ENCODE measurements at regions of chr12 and their contacts with region 1.

Region 1: GRCh38 chr12:25958428-25959070 is at the start of gene RASSF8:
- DNase-seq: no peak
- H3K4me3 ChIP-seq: peak within 1 kb of the TSS; percentile 92
- CTCF ChIP-seq: no peak

Region 2: GRCh38 chr12:26017484-26018206 is 59.1 kb after region 1 on chr12:
- CTCF ChIA-PET with region 1: interaction called, 10 read pairs
- POLR2A ChIA-PET with region 1: interaction called, 3 read pairs
- DNase-seq: no peak
- H3K4me3 ChIP-seq: no peak overlapping the region
- CTCF ChIP-seq: peak; percentile 44

Region 3: DNA sequence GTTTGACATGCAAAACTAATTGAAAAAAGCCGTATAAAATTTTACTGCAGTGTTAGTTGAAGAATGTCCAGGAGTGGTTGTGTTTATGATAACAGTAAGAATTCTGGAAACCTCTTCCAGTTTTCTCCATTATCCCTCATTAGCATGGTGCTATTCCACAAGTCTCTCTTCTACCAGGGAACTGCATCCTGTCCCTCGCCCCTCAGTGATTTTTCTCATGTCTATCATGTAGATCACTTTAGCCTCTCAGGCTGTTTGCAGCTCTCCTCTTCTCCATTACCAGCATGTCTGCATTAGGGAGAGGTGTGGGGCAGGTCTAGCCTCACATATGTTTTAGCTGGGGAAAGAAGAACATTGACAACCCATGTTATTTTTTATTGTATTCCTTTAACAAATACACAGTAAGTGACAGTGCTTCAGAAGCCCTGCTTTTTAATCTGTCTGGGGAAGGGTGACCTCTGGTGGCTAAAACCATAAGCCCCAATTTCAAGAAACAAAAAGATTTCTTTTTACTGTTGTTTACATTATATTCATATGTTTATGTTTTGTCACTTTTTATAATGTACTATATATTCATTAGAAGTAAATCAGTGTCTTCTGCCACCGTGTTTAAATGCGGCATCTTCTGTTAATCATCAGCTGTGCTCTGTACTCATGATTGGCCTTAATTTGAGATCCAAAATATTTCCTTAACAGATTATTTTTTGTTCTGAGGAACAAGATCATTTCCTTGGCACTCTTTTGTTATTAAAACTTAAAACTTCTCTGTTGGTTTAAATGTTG is 70.6 kb after region 1 on chr12:
- CTCF ChIA-PET with region 1: interaction called, 14 read pairs
- POLR2A ChIA-PET with region 1: interaction called, 12 read pairs
- DNase-seq: no peak
- H3K4me3 ChIP-seq: no peak overlapping the region
- CTCF ChIP-seq: peak; percentile 40